GM13976 (cell line): ENCODE measurements at regions of chr9 and their contacts with region 1.

Region 1: DNA sequence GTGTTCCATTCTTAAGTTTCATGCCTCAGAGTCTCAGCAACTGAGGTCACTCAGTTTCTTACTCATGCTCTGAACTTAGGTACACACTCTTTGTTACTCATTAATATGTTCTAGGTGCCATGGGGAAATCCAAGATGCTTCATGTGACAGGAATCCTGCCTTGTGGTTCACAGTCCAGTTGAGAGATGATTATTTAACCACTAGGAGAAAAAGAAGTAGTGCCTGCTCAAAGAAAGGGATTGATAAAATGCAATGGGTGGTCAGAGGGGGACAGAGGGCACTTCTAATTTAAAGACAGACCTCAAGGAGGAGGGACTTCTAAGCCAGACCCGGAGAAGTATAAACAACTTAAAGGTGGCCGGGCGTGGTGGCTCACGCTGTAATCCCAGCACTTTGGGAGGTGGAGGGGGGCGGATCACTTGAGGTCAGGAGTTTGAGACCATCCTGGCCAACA is 69.0 kb downstream of the UGCG start:
- DNase-seq: peak; percentile 62
- CTCF ChIP-seq: no peak

Region 2: DNA sequence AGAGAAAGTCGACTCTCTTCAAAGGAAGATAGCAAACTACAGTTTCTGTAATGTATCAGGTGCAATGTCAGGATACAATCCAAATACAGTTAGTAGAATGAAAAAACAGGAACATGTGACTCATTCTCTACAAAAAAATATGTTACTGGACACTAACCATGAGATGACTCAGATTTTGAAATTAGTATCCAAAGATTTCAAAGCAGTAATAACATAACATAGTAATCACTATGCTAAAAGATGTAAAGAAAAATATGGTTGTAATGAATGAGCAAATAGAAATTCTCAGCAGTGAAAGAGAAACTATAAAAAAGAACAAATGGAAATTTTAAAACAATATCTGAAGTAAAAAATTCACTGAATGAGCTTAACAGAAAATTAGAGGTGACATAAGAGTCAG is 213.1 kb before region 1 on chr9:
- in situ Hi-C with region 1: no loop called
- DNase-seq: no peak
- CTCF ChIP-seq: no peak

Region 3: GRCh38 chr9:111909441-111909840 is 56.2 kb before region 1 on chr9:
- in situ Hi-C with region 1: loop called (anchors 10 kb)
- DNase-seq: no peak
- CTCF ChIP-seq: no peak